CD4-positive, alpha-beta memory T cell (primary cell): ENCODE measurements at regions of chr19 and their contacts with region 1.

Region 1: DNA sequence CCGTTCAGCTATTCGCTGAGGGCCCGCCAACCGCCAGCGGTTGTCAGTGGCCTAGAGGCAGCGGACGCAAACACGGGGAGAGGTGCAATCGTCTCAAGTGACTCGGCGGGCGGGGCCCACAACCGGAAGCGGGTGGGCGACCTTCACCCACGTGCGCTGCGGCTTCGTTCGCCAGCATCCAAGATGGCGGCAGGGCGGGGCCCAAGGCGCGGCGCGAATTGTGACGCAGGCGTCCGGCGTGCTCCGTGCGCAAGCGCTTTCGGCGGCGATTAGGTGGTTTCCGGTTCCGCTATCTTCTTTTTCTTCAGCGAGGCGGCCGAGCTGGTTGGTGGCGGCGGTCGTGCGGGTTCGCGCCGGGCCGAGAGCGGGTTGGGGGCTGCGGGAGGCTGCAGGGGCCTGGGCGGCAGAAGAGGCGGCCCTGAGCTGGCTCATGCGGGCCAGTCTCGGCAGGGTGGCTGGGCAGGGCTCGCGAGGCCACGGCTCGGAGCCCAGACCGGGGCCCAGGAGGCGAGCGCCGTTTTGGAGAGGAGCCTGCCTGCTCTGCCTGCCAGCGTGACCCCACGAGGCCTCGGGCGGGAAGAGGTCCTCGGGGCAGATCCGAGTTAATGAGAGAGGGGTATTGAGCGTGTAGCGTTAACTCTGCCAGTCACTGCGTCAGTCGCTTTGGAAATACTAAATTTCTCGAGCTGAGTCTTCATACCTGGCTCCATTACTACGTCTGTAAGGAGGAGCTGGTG is at the start of gene UBA52:
- DNase-seq: peak; percentile 98 to 99 (median 99)
- H3K4me3 ChIP-seq: peak within 1 kb of the TSS; percentile 69 to 92
- H3K4me3 Mint-ChIP-seq: peak within 1 kb of the TSS; percentile 89 to 97 (median 94)
- H3K27ac ChIP-seq: peak within 1 kb of the TSS; percentile 97
- H3K27ac Mint-ChIP-seq: peak within 1 kb of the TSS; percentile 97 to 99 (median 98)
- H3K4me1 ChIP-seq: peaks cover 26% of the 10 kb centered on the region
- H3K4me1 Mint-ChIP-seq: peaks cover 12 to 36% (median 22%) of the 10 kb centered on the region in 4 donors
- H3K27me3 ChIP-seq: no peaks in the 10 kb centered on the region
- H3K27me3 Mint-ChIP-seq: no peaks in the 10 kb centered on the region
- total RNA-seq, gene UBA52: 1,962 to 1,978 TPM

Region 2: DNA sequence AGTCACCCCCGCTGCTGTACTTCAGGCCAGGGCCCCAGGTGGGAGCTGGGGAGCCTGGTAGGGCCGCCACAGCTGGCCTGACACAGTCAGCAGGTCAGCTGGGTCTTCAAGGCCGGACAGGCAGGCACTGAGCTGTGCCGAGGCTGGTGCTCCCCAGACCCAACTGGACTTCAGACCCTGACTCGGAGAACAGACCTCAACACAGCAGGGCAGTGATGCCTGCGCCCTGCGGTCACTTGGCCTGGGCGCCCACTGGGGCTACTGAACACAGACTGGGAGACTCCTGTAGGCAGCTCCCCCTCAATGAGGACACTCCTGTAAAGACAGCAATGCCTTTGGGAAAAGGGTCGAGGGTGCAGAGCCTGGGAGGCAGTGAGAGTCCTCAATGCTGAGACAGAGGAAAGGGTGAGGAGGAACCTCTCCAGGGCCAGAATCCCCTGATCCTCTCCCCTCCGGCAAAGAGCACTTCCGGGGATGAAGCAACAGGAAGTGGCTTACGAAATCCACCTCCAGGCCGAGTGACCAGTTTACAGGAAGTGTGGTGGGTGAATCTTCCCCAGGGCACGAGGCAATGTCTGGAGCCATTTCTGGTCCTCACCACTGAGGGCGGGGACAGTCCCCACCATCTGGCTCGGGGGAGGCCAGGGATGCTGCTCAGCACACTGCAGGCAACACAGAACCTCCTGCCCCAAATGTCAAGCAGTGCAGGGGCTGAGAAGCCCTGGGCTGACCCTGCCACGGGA is 93.0 kb before region 1 on chr19:
- CTCF ChIA-PET with region 1: no interaction called
- POLR2A ChIA-PET with region 1: interaction called, 4 read pairs
- intact Hi-C with region 1: loop called (anchors 5 kb)
- DNase-seq: peak in 3 of 5 donors; percentile 25 to 78 (median 33)
- H3K4me3 ChIP-seq: no peak overlapping the region
- H3K4me3 Mint-ChIP-seq: peak overlapping the region; percentile 53 to 80 (median 71)
- H3K27ac ChIP-seq: peak overlapping the region; percentile 63
- H3K27ac Mint-ChIP-seq: peak overlapping the region; percentile 89 to 95 (median 94)
- H3K4me1 ChIP-seq: peaks cover 88% of the 10 kb centered on the region
- H3K4me1 Mint-ChIP-seq: peaks cover 54 to 96% (median 78%) of the 10 kb centered on the region in 4 donors
- H3K27me3 ChIP-seq: no peaks in the 10 kb centered on the region
- H3K27me3 Mint-ChIP-seq: no peaks in the 10 kb centered on the region

Region 3: DNA sequence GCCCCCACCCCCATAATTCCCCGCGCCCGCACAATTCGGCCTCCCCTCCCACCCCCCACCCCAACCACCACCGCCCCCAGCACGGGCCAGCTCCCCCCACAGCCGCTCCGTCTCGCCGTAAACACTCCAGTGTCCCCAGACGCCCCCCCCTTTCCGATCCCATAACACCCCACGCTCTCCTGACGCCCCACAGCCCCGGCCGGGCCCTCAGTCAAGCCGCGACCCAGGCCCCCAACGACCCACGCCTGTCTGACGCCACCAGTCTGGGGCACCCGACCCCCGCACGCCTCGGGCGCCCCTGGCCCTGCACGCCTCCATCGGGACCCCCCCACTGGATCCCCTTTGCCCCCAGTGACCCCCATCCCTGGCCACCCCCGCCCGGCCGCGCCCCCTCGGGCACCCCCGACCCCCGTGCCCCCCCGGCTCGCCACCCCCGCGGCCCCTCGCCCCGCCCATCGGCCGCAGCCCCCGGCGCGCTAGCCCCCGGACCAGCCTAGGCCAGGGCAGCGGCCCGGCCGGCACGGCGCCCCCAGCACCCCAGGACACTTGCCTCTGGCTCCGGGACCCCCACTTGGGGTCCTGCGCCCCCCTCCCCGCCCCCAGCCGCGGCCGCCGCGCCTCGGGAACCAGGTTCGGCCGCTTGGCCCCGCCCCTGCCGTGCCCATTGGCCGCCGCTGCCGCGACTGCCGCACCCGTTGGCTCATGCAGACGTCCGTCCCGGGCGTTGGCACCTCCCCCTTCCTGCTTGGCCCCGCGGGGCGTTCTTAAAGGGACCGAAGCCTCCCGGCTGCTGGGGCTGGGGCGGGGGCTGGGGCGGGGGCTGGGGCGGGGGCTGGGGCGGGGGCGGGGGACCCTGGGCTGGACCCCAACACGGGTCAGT is 28.6 kb before region 1 on chr19 and contains the start of gene FKBP8:
- CTCF ChIA-PET with region 1: interaction called, 18 read pairs
- POLR2A ChIA-PET with region 1: interaction called, 44 read pairs
- intact Hi-C with region 1: loop called (anchors 1 kb)
- DNase-seq: peak; percentile 89 to 94 (median 91)
- H3K4me3 ChIP-seq: peak within 1 kb of the TSS; percentile 52 to 59
- H3K4me3 Mint-ChIP-seq: peak within 1 kb of the TSS; percentile 91 to 100 (median 96)
- H3K27ac ChIP-seq: peak within 1 kb of the TSS; percentile 78
- H3K27ac Mint-ChIP-seq: peak within 1 kb of the TSS; percentile 97 to 99 (median 98)
- H3K4me1 ChIP-seq: peaks cover 25% of the 10 kb centered on the region
- H3K4me1 Mint-ChIP-seq: peaks cover 8 to 35% (median 21%) of the 10 kb centered on the region in 4 donors
- H3K27me3 ChIP-seq: no peaks in the 10 kb centered on the region
- H3K27me3 Mint-ChIP-seq: no peaks in the 10 kb centered on the region
- total RNA-seq, gene FKBP8: 231 to 249 TPM

Region 4: GRCh38 chr19:18594096-18594823 is 22.5 kb after region 1 on chr19:
- CTCF ChIA-PET with region 1: interaction called, 53 read pairs
- POLR2A ChIA-PET with region 1: interaction called, 122 read pairs
- intact Hi-C with region 1: no loop called
- DNase-seq: peak; percentile 69 to 80 (median 75)
- H3K4me3 ChIP-seq: peak overlapping the region; percentile 52 to 57
- H3K4me3 Mint-ChIP-seq: peak overlapping the region; percentile 69 to 85 (median 76)
- H3K27ac ChIP-seq: peak overlapping the region; percentile 50
- H3K27ac Mint-ChIP-seq: peak overlapping the region in 6 of 7 donors; percentile 56 to 91 (median 78)
- H3K4me1 ChIP-seq: peaks cover 32% of the 10 kb centered on the region
- H3K4me1 Mint-ChIP-seq: peaks cover 18 to 36% (median 25%) of the 10 kb centered on the region in 4 donors
- H3K27me3 ChIP-seq: no peaks in the 10 kb centered on the region
- H3K27me3 Mint-ChIP-seq: peaks cover 0 to under 1% of the 10 kb centered on the region in 2 donors

Region 5: GRCh38 chr19:18620916-18621315 is 49.2 kb after region 1 on chr19:
- CTCF ChIA-PET with region 1: no interaction called
- POLR2A ChIA-PET with region 1: no interaction called
- intact Hi-C with region 1: no loop called
- DNase-seq: no peak
- H3K4me3 ChIP-seq: no peak overlapping the region
- H3K4me3 Mint-ChIP-seq: no peak overlapping the region
- H3K27ac ChIP-seq: no peak overlapping the region
- H3K27ac Mint-ChIP-seq: no peak overlapping the region
- H3K4me1 ChIP-seq: no peaks in the 10 kb centered on the region
- H3K4me1 Mint-ChIP-seq: peaks cover 0 to 3% (median 0%) of the 10 kb centered on the region in 4 donors
- H3K27me3 ChIP-seq: peaks cover 4% of the 10 kb centered on the region
- H3K27me3 Mint-ChIP-seq: peaks cover 10 to 15% of the 10 kb centered on the region in 2 donors

Region 6: DNA sequence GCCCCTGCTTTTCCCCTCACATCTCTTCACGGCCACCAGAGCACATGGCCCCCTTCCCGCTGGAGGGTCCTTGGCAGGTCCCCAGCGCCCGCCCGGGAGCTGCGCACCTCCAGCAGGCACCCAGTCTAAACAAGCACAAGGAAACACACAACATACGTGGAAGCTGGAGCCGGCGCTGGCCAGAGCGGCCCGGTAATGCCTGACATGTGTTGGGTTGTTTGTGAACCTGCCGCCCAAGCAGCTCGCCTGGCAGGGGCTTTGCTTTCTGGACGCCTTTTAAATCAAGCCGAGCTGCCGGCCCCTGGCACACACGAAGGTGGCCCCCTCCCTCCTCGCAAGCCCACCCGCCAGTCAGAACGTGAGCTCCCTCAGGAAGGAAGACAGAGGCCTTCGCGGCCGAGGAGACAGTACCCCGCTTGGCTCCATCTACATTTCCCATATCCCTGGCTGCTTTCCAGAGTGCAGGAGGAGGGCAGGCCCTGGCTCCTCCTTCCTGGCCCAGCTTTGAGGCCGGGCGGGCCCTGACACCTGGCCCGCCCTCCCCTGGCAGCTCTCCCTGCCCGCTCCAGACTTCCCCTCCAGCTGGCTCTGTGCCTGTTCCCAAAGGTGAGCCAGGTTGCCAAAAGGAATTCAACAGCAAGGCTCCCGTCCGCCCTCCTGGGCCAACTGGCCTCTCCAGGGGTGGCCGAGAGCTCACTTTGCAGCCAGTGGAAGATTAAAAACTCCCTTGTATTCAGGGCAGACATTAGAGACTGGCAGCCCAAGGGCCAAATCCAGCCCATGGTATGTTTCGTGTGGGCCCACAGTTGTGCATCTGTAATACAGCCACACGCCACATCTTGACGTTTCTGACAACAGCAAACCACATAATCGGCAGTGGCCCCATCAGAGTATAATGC is 190.6 kb after region 1 on chr19:
- CTCF ChIA-PET with region 1: no interaction called
- POLR2A ChIA-PET with region 1: no interaction called
- intact Hi-C with region 1: no loop called
- DNase-seq: no peak
- H3K4me3 ChIP-seq: no peak overlapping the region
- H3K4me3 Mint-ChIP-seq: no peak overlapping the region
- H3K27ac ChIP-seq: no peak overlapping the region
- H3K27ac Mint-ChIP-seq: no peak overlapping the region
- H3K4me1 ChIP-seq: no peaks in the 10 kb centered on the region
- H3K4me1 Mint-ChIP-seq: no peaks in the 10 kb centered on the region
- H3K27me3 ChIP-seq: no peaks in the 10 kb centered on the region
- H3K27me3 Mint-ChIP-seq: no peaks in the 10 kb centered on the region

Region 7: DNA sequence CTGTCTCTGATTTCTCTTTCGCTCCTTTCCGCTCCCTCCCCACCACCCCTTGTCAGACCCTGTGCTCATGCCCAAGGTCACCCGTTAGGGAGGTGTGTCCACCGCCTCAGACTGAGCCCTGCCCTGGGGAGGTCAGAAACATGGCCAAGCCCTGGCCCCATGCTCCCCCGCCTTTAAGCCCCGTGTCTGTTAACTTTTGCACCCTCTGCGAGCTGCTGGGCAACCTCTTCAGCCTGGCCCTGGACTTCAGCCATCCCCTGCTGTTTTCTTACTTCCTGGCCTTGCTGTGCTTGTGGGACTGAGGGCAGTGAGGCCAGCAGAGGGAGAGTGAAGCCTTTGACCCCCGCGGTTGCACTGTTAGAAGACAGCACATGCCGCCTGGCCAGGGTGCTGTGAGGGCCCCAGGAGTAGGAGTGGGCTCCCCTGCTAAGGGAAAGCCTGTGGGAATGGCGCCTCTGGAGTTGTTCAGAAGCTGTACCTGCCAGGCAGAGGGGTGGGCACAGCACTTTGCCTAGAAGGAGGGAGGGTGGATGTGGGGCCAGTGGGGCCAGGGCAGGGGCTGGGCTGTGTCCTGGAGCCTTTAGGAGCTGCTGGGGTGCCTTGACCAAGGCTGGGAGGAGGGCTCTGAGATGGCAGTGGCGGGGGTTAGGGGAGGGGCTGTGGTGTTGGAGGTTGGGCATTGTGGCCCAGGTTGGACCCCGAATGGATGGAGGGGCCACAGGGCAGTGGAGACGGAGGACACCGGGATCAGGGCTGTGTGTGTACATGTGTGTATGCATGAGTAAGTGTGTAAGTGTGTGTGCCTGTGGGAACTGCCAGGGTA is 267.9 kb after region 1 on chr19:
- CTCF ChIA-PET with region 1: no interaction called
- POLR2A ChIA-PET with region 1: no interaction called
- intact Hi-C with region 1: no loop called
- DNase-seq: no peak
- H3K4me3 ChIP-seq: no peak overlapping the region
- H3K4me3 Mint-ChIP-seq: peak overlapping the region in 3 of 8 donors; percentile 25 to 63 (median 48)
- H3K27ac ChIP-seq: no peak overlapping the region
- H3K27ac Mint-ChIP-seq: peak overlapping the region in 4 of 7 donors; percentile 13 to 84 (median 60)
- H3K4me1 ChIP-seq: peaks cover 95% of the 10 kb centered on the region
- H3K4me1 Mint-ChIP-seq: peaks cover 62 to 98% (median 85%) of the 10 kb centered on the region in 4 donors
- H3K27me3 ChIP-seq: no peaks in the 10 kb centered on the region
- H3K27me3 Mint-ChIP-seq: no peaks in the 10 kb centered on the region